ENCODE measurements at regions of chr3 and their contacts with region 1.

Region 1: GRCh38 chr3:149536429-149536828 is 61.9 kb downstream of the TM4SF4 start:
- DNase-seq: no peak
- H3K4me3 Mint-ChIP-seq: no peak overlapping the region
- H3K27ac Mint-ChIP-seq: peak overlapping the region; percentile 19
- H3K4me1 Mint-ChIP-seq: peaks cover 75% of the 10 kb centered on the region
- H3K27me3 Mint-ChIP-seq: no peaks in the 10 kb centered on the region
- CTCF ChIP-seq: no peak

Region 2: DNA sequence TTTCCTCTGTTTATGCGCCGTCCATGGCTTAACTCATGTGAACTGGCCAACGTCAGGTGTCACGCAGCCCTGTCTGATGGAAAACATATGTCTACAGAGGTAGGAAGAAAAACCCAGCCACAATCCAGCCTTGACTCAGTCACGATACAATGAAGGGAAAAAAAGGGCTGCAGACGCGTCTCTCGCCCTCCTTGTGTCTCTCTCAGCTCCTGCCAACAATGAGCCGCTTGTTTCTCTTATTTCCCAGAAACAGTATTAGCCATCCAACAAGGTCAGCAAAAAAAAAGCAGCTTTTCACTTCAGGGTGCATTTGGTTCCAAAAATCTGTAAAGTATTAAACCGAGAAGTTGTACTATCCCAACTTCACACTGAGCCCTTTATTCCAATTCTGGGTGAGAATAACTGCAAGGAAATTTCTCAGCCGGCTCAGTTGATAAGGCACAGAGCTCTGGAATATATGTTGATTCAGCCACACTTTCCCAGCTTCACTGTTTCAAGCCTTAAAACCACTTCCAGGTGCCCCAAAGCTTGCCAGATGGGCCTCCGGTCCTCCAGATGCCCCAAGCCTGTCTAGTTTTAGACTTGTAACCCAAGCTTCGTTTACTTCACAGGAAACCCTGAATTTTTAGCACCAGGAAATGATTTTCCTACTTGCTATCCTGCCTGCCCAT is 17.5 kb after region 1 on chr3:
- CTCF ChIA-PET with region 1: interaction called, 3 read pairs
- intact Hi-C with region 1: loop called (anchors 1 kb)
- DNase-seq: peak; percentile 62
- H3K4me3 Mint-ChIP-seq: peak overlapping the region; percentile 51
- H3K27ac Mint-ChIP-seq: peak overlapping the region; percentile 96
- H3K4me1 Mint-ChIP-seq: peaks cover 81% of the 10 kb centered on the region
- H3K27me3 Mint-ChIP-seq: no peaks in the 10 kb centered on the region
- CTCF ChIP-seq: no peak

Region 3: GRCh38 chr3:149566292-149566975 is 30.0 kb after region 1 on chr3:
- CTCF ChIA-PET with region 1: interaction called, 17 read pairs
- intact Hi-C with region 1: no loop called
- DNase-seq: no peak
- H3K4me3 Mint-ChIP-seq: no peak overlapping the region
- H3K27ac Mint-ChIP-seq: peak overlapping the region; percentile 27
- H3K4me1 Mint-ChIP-seq: peaks cover 63% of the 10 kb centered on the region
- H3K27me3 Mint-ChIP-seq: no peaks in the 10 kb centered on the region
- CTCF ChIP-seq: no peak

Region 4: GRCh38 chr3:149581681-149582370 is 45.4 kb after region 1 on chr3:
- CTCF ChIA-PET with region 1: no interaction called
- intact Hi-C with region 1: loop called (anchors 2 kb)
- DNase-seq: peak; percentile 87
- H3K4me3 Mint-ChIP-seq: peak overlapping the region; percentile 53
- H3K27ac Mint-ChIP-seq: peak overlapping the region; percentile 77
- H3K4me1 Mint-ChIP-seq: peaks cover 87% of the 10 kb centered on the region
- H3K27me3 Mint-ChIP-seq: no peaks in the 10 kb centered on the region
- CTCF ChIP-seq: no peak

Region 5: GRCh38 chr3:149638228-149639092 is 102.0 kb after region 1 on chr3:
- CTCF ChIA-PET with region 1: interaction called, 5 read pairs
- intact Hi-C with region 1: loop called (anchors 5 kb)
- DNase-seq: peak; percentile 65
- H3K4me3 Mint-ChIP-seq: peak overlapping the region; percentile 60
- H3K27ac Mint-ChIP-seq: peak overlapping the region; percentile 78
- H3K4me1 Mint-ChIP-seq: peaks cover 86% of the 10 kb centered on the region
- H3K27me3 Mint-ChIP-seq: no peaks in the 10 kb centered on the region
- CTCF ChIP-seq: no peak